IMR-90 (cell line): ENCODE measurements at regions of chr2 and their contacts with region 1.

Region 1: DNA sequence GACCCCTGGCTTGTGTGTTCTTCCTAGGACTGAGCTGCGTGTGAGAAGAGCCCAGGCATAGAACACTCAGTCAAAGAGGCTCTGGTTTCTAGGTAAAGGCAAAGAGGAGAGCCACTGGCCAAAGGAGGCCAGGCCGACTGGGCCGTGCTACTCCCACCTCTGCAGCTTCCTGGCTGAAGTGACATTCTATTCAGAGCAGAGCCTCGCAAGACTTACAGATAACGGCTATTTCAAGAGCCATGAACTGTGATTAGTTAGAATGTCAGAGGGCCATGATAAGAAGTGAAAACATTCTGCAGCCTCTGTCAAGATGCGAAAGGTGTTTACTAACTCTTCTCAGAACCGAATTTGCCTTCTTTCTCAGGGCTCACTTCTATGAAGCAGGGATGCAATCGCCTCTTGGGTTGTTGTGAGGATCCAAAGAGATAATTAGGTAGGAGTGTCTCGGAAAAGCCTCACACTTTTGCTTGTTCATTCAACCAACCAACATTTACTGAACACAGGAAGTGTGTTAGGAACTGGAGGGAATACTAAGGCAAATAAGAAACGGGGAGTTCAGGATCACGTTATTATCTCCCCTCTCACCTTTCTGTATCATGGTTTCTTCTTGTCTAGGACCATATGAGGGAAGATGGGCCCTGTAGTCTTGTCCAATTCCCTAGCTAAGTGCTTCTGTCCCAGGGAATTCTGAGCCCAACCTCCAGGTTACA is 3.4 kb upstream of the DNAJC5G start:
- DNase-seq: no peak
- ATAC-seq: no peak
- H3K4me3 ChIP-seq: no peak overlapping the region
- H3K27ac ChIP-seq: no peak overlapping the region
- H3K4me1 ChIP-seq: no peaks in the 10 kb centered on the region
- H3K27me3 ChIP-seq: peaks cover 48% of the 10 kb centered on the region
- CTCF ChIP-seq: no peak
- POLR2A ChIP-seq: no peak
- RAD21 ChIP-seq: no peak

Region 2: GRCh38 chr2:26792720-26793119 is 479.1 kb before region 1 on chr2:
- CTCF ChIA-PET with region 1: no interaction called
- POLR2A ChIA-PET with region 1: no interaction called
- dilution Hi-C with region 1: no loop called
- in situ Hi-C with region 1: no loop called
- intact Hi-C with region 1: no loop called
- DNase-seq: peak; percentile 12
- ATAC-seq: no peak
- H3K4me3 ChIP-seq: no peak overlapping the region
- H3K27ac ChIP-seq: no peak overlapping the region
- H3K4me1 ChIP-seq: no peaks in the 10 kb centered on the region
- H3K27me3 ChIP-seq: no peaks in the 10 kb centered on the region
- CTCF ChIP-seq: no peak
- POLR2A ChIP-seq: no peak
- RAD21 ChIP-seq: no peak

Region 3: GRCh38 chr2:27249891-27250651 is 21.7 kb before region 1 on chr2:
- CTCF ChIA-PET with region 1: interaction called, 4 read pairs
- POLR2A ChIA-PET with region 1: interaction called, 20 read pairs
- dilution Hi-C with region 1: no loop called
- in situ Hi-C with region 1: no loop called
- intact Hi-C with region 1: no loop called
- DNase-seq: peak; percentile 31
- ATAC-seq: peak; percentile 81
- H3K4me3 ChIP-seq: no peak overlapping the region
- H3K27ac ChIP-seq: no peak overlapping the region
- H3K4me1 ChIP-seq: peaks cover under 1% of the 10 kb centered on the region
- H3K27me3 ChIP-seq: peaks cover 11% of the 10 kb centered on the region
- CTCF ChIP-seq: peak; percentile 78
- POLR2A ChIP-seq: no peak
- RAD21 ChIP-seq: peak; percentile 81

Region 4: DNA sequence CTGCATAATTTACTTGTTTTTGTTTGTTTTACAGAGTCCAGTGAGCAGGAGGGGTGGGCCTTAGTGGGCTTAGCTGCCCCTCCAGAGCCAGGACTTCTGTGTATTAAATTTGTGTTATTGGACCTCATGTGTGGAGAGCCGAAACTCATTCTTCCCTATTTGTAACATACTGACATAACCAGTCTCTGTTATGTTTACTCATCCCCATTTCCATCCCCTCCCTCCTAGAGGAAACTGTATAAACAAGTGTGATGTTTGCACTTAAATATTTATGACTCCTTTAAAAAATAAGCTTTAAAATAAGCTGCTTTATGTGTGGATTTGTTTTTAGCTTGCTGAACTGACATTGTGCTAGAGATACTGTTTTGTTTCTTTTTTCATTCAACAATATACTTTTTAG is 324.8 kb after region 1 on chr2:
- CTCF ChIA-PET with region 1: no interaction called
- POLR2A ChIA-PET with region 1: no interaction called
- dilution Hi-C with region 1: no loop called
- in situ Hi-C with region 1: no loop called
- intact Hi-C with region 1: no loop called
- DNase-seq: peak; percentile 68
- ATAC-seq: peak; percentile 86
- H3K4me3 ChIP-seq: no peak overlapping the region
- H3K27ac ChIP-seq: no peak overlapping the region; the same call in 1 of the 2 replicates
- H3K4me1 ChIP-seq: peaks cover 11% of the 10 kb centered on the region
- H3K27me3 ChIP-seq: no peaks in the 10 kb centered on the region
- CTCF ChIP-seq: no peak
- POLR2A ChIP-seq: no peak
- RAD21 ChIP-seq: no peak